Dendritic cell treated with granulocyte-macrophage colony-stimulating factor and Interleukin-4, amounts not matched to agents 40 ng/mL and 50 ng/mL, for 4 days (primary cell): ENCODE measurements at regions of chr4 and their contacts with region 1.

Region 1: DNA sequence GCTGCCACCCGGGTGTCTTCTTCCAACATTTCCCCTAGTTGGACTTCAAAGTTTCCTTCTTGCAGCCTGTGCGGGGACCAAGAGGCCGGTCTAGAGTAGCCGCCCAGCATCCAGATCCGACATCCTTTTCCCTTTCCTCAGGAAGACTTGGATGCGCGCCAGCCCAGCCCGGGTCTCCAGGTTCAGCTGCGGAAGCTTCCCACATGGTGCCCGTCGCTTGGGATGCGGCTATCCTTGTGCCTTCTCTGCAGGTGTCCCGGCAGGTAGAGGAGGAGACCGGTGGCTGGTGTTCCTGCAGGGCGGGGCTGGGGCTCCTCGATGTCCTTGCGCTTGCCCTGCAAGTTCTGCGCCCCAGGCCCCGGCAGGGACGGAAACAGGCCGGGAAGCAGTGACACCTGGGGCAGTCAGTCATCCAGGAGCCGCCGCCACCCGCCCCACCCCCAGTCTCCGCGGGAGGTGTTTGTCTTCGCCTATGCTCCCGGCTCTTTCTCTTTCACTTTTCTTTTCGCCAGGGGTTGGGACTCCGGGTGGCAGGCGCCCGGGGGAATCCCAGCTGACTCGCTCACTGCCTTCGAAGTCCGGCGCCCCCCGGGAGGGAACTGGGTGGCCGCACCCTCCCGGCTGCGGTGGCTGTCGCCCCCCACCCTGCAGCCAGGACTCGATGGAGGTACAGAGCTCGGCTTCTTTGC is at the start of gene IL15:
- H3K4me3 Mint-ChIP-seq: peak within 1 kb of the TSS; percentile 92
- H3K27ac Mint-ChIP-seq: peak within 1 kb of the TSS; percentile 92
- H3K4me1 Mint-ChIP-seq: peaks cover 29% of the 10 kb centered on the region
- H3K27me3 Mint-ChIP-seq: peaks cover 24% of the 10 kb centered on the region

Region 2: DNA sequence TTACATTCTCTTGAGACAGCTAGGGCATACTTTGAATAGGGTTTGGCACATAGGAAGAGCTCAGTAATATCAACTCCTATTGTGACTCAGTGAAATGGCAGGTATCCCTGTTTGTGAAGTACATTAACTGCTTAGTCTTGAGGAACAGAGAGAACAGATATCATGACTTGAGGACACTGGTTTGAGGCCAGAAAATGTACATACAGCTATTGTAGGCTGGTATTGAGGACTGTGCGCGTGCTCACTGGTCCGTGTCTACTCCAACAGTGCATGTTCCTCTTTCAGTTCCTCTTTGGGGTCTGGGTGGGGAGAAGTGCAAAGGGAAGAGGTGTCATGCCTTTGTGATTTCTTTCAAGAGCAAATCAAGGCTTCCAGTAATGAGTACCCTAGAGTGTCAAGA is 845.5 kb before region 1 on chr4:
- intact Hi-C with region 1: loop called (anchors 10 kb)
- H3K4me3 Mint-ChIP-seq: no peak overlapping the region
- H3K27ac Mint-ChIP-seq: peak overlapping the region; percentile 92
- H3K4me1 Mint-ChIP-seq: peaks cover 58% of the 10 kb centered on the region
- H3K27me3 Mint-ChIP-seq: no peaks in the 10 kb centered on the region

Region 3: GRCh38 chr4:141307241-141307689 is 329.0 kb before region 1 on chr4:
- intact Hi-C with region 1: loop called (anchors 10 kb)
- H3K4me3 Mint-ChIP-seq: no peak overlapping the region
- H3K27ac Mint-ChIP-seq: peak overlapping the region; percentile 27
- H3K4me1 Mint-ChIP-seq: peaks cover 37% of the 10 kb centered on the region
- H3K27me3 Mint-ChIP-seq: peaks cover 2% of the 10 kb centered on the region

Region 4: DNA sequence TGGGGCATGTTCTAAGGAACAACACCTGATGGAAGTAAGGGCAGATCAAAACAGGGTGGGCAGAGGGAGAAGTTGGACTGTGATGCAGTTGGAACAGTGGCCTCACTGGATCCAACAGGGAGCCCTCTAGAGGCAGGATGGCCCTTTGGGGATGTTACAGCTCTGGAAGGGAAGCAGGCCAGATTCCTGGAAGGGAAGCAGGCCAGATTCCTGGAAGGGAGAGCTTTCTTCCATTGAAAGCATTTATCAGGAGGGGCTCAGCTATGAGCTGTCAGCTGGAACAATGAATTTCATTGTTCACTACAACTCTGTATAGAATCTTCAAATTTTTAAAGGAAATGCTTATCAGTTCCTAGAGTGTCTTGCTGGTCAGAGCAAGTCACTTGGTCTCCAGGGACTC is 17.9 kb after region 1 on chr4:
- intact Hi-C with region 1: no loop called
- H3K4me3 Mint-ChIP-seq: no peak overlapping the region
- H3K27ac Mint-ChIP-seq: no peak overlapping the region
- H3K4me1 Mint-ChIP-seq: peaks cover 24% of the 10 kb centered on the region
- H3K27me3 Mint-ChIP-seq: no peaks in the 10 kb centered on the region

Region 5: GRCh38 chr4:141676087-141676670 is 40.0 kb after region 1 on chr4:
- intact Hi-C with region 1: no loop called
- H3K4me3 Mint-ChIP-seq: no peak overlapping the region
- H3K27ac Mint-ChIP-seq: no peak overlapping the region
- H3K4me1 Mint-ChIP-seq: no peaks in the 10 kb centered on the region
- H3K27me3 Mint-ChIP-seq: peaks cover 3% of the 10 kb centered on the region

Region 6: DNA sequence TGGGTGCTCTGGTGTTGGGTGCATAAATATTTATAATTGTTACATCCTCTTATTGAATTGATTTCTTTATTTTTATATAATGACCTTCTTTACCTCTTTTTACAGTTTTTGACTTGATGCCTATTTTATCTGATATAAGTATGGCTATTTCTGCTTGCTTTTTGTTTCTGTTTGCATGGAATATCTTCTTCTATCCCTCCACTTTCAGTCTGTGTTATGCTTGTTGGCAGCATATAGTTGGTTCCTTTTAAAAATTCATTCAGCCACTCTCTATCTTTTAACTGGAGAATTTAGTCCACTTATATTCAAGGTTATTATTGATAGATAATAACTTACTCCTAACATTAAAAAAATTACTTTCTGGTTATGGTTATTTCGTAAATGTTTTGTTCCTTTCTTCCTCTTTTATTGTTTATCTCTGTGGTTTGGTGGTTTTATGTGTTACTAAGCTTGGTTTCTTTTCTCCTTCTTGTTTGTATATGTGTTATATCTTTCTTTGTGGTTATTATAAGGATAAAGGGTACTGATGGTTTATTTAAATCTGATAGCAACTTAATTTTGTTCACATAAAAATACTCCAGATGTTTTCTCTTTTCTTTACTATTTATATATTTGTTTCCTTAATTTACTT is 69.6 kb after region 1 on chr4:
- intact Hi-C with region 1: loop called (anchors 5 kb)
- H3K4me3 Mint-ChIP-seq: peak overlapping the region; percentile 24
- H3K27ac Mint-ChIP-seq: peak overlapping the region; percentile 21
- H3K4me1 Mint-ChIP-seq: peaks cover 40% of the 10 kb centered on the region
- H3K27me3 Mint-ChIP-seq: peaks cover 37% of the 10 kb centered on the region